ENCODE measurements at regions of chr4 and their contacts with region 1.

Region 1: DNA sequence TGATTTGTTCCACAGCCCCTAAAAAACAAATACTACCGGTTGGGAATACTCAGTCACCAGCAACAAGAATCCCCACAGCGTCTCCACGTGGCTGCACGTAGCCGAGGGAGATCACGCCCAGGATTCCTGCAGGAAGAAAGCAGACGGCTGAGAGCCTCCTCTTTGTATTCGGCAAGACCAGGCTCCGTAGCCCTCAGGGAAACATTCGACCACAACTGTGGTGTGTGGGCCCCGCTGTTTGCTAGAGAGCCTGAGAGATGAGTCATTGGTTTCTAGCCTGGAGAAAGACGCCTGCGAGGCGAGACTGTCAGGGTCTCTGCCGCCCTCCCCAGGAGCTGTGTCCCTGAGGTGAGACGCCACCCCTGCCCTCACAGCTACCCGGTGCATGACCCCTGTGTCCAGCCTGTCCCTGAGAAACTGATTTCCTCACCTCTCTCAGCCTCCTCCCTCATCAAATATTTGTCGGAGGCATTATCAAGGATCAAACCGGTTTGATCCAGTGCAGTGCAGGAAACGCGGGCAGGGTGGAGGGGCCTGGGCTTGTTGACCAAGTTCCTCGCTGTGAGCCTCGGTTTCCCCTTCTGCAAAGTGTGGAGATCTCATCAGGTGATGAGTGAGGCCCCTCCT is 4.7 kb upstream of the S100P start:
- DNase-seq: peak; percentile 62 to 90 (median 71)
- H3K4me3 ChIP-seq: peak overlapping the region; percentile 57
- H3K4me3 Mint-ChIP-seq: peak overlapping the region; percentile 91 to 99 (median 97)
- H3K27ac ChIP-seq: peak overlapping the region; percentile 72
- H3K27ac Mint-ChIP-seq: peak overlapping the region; percentile 93 to 100 (median 99)
- H3K4me1 ChIP-seq: peaks cover 65% of the 10 kb centered on the region
- H3K4me1 Mint-ChIP-seq: peaks cover 69 to 84% (median 82%) of the 10 kb centered on the region in 3 donors
- H3K27me3 ChIP-seq: no peaks in the 10 kb centered on the region
- H3K27me3 Mint-ChIP-seq: no peaks in the 10 kb centered on the region

Region 2: DNA sequence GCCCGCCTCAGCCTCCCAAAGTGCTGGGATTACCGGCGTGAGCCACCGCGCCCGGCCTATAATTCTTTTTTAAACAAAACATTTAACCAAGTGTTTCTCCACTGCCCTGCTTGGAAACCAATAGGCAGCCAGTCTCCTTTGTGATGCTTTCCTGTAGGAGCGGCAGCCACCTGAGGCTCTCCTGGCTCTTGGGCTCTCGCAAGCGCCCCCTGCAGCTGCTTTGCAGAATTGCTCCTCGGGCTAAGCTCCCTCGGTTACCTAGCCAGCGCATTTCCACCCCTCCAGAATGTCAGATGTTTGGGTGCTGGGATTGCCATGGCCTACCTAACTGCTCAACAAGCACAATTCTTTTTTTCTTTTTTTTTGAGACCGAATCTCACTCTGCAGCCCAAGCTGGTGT is 12.4 kb after region 1 on chr4:
- CTCF ChIA-PET with region 1: interaction called, 39 read pairs
- POLR2A ChIA-PET with region 1: interaction called, 41 read pairs
- DNase-seq: peak in 2 of 5 donors; percentile 36 to 44
- H3K4me3 ChIP-seq: no peak overlapping the region
- H3K4me3 Mint-ChIP-seq: no peak overlapping the region
- H3K27ac ChIP-seq: no peak overlapping the region
- H3K27ac Mint-ChIP-seq: peak overlapping the region in 5 of 8 donors; percentile 47 to 90 (median 61)
- H3K4me1 ChIP-seq: peaks cover 60% of the 10 kb centered on the region
- H3K4me1 Mint-ChIP-seq: peaks cover 63 to 81% (median 77%) of the 10 kb centered on the region in 3 donors
- H3K27me3 ChIP-seq: no peaks in the 10 kb centered on the region
- H3K27me3 Mint-ChIP-seq: peaks cover 0 to 3% of the 10 kb centered on the region in 2 donors

Region 3: GRCh38 chr4:6709230-6710114 is 20.5 kb after region 1 on chr4 and contains the start of gene MRFAP1L1:
- CTCF ChIA-PET with region 1: interaction called, 19 read pairs
- POLR2A ChIA-PET with region 1: interaction called, 41 read pairs
- DNase-seq: peak; percentile 96 to 98 (median 97)
- H3K4me3 ChIP-seq: peak within 1 kb of the TSS; percentile 88
- H3K4me3 Mint-ChIP-seq: peak within 1 kb of the TSS; percentile 98 to 100 (median 99)
- H3K27ac ChIP-seq: peak within 1 kb of the TSS; percentile 88
- H3K27ac Mint-ChIP-seq: peak within 1 kb of the TSS; percentile 93 to 100 (median 98)
- H3K4me1 ChIP-seq: peaks cover 51% of the 10 kb centered on the region
- H3K4me1 Mint-ChIP-seq: peaks cover 57 to 64% (median 64%) of the 10 kb centered on the region in 3 donors
- H3K27me3 ChIP-seq: no peaks in the 10 kb centered on the region
- H3K27me3 Mint-ChIP-seq: no peaks in the 10 kb centered on the region
- total RNA-seq, gene MRFAP1L1: 54.9 to 55.9 TPM

Region 4: DNA sequence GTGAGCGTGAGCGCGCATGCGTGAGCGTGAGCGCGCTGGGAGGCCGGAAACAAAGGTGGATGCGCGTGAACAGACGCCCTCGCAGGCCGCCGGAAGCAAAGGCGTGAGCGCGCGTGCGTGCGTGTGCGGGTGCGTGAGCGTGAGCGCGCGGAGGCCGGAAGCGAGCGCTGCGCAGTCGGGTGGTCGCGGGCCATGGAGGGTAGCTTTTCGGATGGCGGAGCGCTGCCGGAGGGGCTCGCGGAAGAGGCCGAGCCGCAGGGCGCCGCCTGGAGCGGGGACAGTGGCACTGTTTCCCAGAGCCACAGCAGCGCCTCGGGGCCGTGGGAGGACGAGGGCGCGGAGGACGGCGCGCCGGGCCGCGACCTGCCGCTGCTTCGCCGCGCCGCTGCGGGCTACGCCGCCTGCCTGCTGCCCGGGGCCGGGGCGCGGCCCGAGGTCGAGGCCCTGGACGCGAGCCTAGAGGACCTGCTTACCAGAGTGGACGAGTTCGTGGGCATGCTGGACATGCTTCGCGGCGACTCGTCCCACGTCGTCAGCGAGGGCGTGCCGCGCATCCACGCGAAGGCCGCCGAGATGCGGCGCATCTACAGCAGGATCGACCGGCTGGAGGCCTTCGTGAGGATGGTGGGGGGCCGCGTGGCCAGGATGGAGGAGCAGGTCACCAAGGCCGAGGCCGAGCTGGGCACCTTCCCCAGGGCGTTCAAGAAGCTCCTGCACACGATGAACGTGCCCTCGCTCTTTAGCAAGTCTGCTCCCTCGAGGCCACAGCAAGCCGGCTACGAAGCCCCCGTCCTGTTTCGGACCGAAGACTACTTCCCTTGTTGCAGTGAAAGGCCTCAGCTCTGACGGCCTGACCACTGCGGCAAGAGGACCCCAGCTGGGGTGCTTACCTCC is 27.3 kb after region 1 on chr4 and contains the start of gene BLOC1S4:
- CTCF ChIA-PET with region 1: interaction called, 18 read pairs
- POLR2A ChIA-PET with region 1: interaction called, 23 read pairs
- DNase-seq: peak; percentile 83 to 94 (median 92)
- H3K4me3 ChIP-seq: peak within 1 kb of the TSS; percentile 78
- H3K4me3 Mint-ChIP-seq: peak within 1 kb of the TSS; percentile 93 to 97 (median 96)
- H3K27ac ChIP-seq: peak within 1 kb of the TSS; percentile 80
- H3K27ac Mint-ChIP-seq: peak within 1 kb of the TSS; percentile 92 to 98 (median 96)
- H3K4me1 ChIP-seq: peaks cover 34% of the 10 kb centered on the region
- H3K4me1 Mint-ChIP-seq: peaks cover 29 to 48% (median 48%) of the 10 kb centered on the region in 3 donors
- H3K27me3 ChIP-seq: no peaks in the 10 kb centered on the region
- H3K27me3 Mint-ChIP-seq: no peaks in the 10 kb centered on the region
- total RNA-seq, gene BLOC1S4: 21.5 to 22.9 TPM

Measured in CD8-positive, alpha-beta memory T cell (primary cell).